Right cardiac atrium (tissue), 5 donors: ENCODE measurements at regions of chr12 and their contacts with region 1.

Region 1: DNA sequence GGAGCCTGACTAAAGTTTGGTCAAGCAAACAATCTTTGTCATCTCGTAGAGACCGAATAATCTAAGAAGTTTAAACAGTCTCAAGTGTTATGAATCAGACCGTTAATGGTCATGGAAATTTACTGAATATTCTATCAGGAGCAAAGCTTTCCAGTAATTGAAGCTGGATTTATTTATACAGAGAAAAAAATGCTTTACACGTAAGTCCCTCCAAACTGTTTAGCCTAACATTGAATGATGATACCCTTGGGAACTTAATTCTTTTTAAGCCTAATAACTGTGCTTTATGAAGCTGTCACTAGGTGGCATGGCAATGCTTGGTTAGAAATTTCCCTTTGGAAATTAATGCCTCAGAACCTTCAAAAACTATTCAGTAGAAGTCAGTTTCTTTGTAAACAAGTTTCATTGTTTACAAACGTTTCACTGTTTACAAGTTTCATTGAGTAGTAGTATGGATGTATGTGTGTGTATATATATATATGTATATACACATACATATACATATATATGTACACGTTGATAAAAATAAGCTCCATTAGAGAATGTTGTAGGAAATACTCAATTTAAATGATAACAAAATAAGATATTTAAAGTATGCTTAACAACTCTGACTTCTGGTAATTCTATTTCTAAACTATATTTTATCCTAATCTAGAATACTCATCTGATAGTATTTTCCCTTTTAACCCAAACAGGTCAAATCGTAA is 32.1 kb downstream of the DEPDC4 start:
- DNase-seq: no peak
- ATAC-seq: peak; percentile 35 to 43
- H3K4me3 ChIP-seq: no peak overlapping the region
- H3K27ac ChIP-seq: no peak overlapping the region
- H3K4me1 ChIP-seq: no peaks in the 10 kb centered on the region
- H3K27me3 ChIP-seq: no peaks in the 10 kb centered on the region

Region 2: DNA sequence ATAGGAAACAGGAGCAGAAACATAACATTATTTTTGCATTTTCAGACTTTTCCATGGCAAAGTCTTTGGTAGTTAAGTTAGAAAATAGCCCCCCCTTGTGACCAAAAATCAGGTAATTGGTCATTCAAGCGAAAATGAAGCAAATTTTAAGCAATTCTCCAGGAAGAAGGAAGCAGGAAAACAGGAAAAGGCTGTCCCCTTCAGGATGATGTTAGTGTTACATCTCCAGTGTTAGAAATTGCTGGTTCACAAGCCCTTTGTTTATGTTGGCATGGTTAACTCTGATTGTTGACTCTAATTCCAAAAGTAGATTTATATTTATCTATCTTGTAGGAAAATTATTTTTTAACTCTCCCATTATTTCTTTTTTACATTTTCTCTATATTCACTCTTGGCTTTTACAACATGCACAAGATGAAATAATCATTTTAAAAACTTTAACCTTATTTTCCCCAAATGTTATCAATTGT is 319.9 kb after region 1 on chr12:
- intact Hi-C with region 1: loop called in 3 of 4 experiments (anchors 10 kb)
- DNase-seq: no peak
- ATAC-seq: peak; percentile 84 to 85
- H3K4me3 ChIP-seq: no peak overlapping the region
- H3K27ac ChIP-seq: no peak overlapping the region
- H3K4me1 ChIP-seq: no peaks in the 10 kb centered on the region
- H3K27me3 ChIP-seq: no peaks in the 10 kb centered on the region

Region 3: GRCh38 chr12:100733817-100734593 is 499.3 kb after region 1 on chr12:
- intact Hi-C with region 1: loop called in 3 of 4 experiments (anchors 5 to 10 kb)
- DNase-seq: no peak
- ATAC-seq: no peak
- H3K4me3 ChIP-seq: no peak overlapping the region
- H3K27ac ChIP-seq: no peak overlapping the region
- H3K4me1 ChIP-seq: no peaks in the 10 kb centered on the region
- H3K27me3 ChIP-seq: no peaks in the 10 kb centered on the region

Region 4: GRCh38 chr12:100741084-100741711 is 506.4 kb after region 1 on chr12:
- intact Hi-C with region 1: loop called in 3 of 4 experiments (anchors 5 to 10 kb)
- DNase-seq: no peak
- ATAC-seq: no peak
- H3K4me3 ChIP-seq: no peak overlapping the region
- H3K27ac ChIP-seq: no peak overlapping the region
- H3K4me1 ChIP-seq: no peaks in the 10 kb centered on the region
- H3K27me3 ChIP-seq: no peaks in the 10 kb centered on the region